ENCODE measurements at regions of chr4 and their contacts with region 1.

Region 1: DNA sequence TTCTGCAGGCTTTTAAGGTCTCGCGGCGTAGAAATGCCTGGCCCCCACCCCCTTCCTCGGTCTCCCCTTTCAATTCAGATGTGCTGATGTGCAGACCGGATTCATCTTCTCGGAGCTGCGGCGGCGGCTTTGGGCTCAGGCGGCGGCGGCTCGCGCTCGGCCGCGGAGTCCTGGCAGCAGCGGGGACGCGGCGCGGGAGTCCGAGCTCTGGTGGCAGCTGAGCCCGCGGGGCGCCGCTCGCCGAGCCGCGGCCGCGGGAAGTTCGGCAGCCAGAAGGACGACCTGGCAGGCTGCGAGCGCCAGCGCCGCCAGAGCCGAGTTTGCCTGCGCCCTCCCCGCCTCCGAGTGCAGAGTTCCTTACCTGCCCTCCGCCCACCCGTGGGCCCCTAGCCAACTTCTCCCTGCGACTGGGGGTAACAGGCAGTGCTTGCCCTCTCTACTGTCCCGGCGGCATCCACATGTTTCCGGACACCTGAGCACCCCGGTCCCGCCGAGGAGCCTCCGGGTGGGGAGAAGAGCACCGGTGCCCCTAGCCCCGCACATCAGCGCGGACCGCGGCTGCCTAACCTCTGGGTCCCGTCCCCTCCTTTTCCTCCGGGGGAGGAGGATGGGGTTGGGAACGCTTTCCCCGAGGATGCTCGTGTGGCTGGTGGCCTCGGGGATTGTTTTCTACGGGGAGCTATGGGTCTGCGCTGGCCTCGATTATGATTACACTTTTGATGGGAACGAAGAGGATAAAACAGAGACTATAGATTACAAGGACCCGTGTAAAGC is 448 bp downstream of the TLL1 start:
- DNase-seq: peak; percentile 25 to 66 (median 29)
- ATAC-seq: peak in 3 of 4 donors; percentile 52 to 87 (median 82)
- H3K4me3 ChIP-seq: peak overlapping the region; percentile 37 to 73 (median 60)
- H3K27ac ChIP-seq: peak overlapping the region in 6 of 12 donors; percentile 19 to 55 (median 35)
- H3K4me1 ChIP-seq: peaks cover 0 to 28% (median 2%) of the 10 kb centered on the region in 12 donors
- H3K27me3 ChIP-seq: peaks cover 0 to 41% (median 0%) of the 10 kb centered on the region in 9 donors
- CTCF ChIP-seq: no peak
- POLR2A ChIP-seq: no peak

Region 2: DNA sequence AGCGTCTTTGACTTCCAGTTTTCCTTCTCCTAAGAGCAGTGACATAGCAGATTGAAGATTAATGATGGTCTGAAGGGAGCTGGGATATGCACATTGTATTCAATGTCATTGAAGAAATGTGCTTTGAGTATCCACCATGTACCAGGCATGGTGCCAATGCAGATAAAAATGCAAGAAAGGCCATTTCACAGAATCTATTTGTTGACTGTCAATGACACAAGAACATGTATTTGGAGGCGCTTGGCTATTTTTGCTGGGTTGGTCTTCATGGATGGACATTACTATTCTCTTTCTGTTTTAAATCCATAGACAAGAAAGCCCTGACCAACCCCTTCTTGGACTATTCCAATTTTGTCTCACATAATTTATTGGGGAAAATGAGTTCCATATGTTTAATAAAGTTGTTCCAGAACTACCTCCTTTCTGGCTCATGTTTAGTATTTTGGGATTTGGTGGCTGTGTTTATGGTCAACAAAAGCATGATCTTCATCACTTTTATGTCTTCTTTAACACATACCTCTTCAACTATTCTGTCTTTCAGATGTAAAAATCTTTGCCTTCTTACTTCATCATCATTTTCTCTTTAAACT is 320.2 kb before region 1 on chr4:
- intact Hi-C with region 1: loop called in 2 of 10 experiments (anchors 10 kb)
- DNase-seq: no peak
- ATAC-seq: no peak
- H3K4me3 ChIP-seq: no peak overlapping the region
- H3K27ac ChIP-seq: no peak overlapping the region
- H3K4me1 ChIP-seq: no peaks in the 10 kb centered on the region
- H3K27me3 ChIP-seq: no peaks in the 10 kb centered on the region
- CTCF ChIP-seq: no peak
- POLR2A ChIP-seq: no peak

Region 3: DNA sequence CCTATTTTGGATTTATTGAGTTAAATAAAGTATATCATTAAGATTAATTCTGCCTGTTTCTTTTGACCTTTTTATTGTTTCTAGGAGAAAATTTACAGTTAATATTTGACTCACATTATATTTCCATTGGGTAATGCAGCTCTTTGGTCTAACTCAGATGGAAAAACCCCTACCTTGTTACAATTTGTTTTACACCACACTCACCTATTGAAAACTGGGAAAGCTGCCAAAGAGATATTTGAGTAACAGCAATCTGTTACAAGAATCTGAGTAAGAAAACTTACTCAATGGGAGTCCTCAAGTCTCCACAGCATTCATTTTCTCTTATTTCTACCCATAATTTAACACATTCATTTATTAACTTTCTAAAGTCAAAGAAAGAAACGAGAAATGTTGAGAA is 108.4 kb before region 1 on chr4:
- intact Hi-C with region 1: no loop called
- DNase-seq: no peak
- ATAC-seq: no peak
- H3K4me3 ChIP-seq: no peak overlapping the region
- H3K27ac ChIP-seq: no peak overlapping the region
- H3K4me1 ChIP-seq: peaks cover 0 to 15% (median 4%) of the 10 kb centered on the region in 12 donors
- H3K27me3 ChIP-seq: no peaks in the 10 kb centered on the region
- CTCF ChIP-seq: no peak
- POLR2A ChIP-seq: no peak

Region 4: DNA sequence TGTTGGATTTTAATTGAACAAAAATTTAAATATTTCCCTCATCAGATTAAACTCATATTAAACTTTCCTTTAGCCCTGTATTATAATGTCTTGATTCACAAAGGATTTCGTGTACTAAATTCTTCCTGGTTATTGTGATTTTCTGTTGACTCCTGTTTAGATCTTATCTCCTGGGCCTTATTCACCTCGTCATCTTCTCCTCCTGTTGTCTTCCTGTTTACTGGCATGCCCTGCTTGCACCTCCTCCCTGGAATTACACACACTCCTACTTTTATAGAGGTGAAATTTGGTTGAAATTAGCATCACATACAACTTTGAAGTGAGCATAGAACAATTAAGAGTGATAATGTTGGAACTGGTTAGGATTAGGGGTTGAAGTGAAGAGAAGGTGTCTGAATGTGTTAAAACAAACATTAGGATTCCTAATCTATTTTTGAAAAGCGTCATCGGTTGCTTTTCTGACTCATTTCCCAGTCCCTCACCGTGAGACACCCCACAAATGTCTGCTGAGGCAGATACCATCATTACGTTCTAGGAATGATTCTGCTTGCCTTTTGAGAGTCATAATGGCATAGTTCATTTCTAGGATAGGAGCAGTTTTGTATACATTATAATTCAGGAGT is 32.0 kb after region 1 on chr4:
- intact Hi-C with region 1: loop called in 1 of 10 experiments (anchors 5 kb)
- DNase-seq: no peak
- ATAC-seq: peak in 1 of 4 donors; percentile 62
- H3K4me3 ChIP-seq: no peak overlapping the region
- H3K27ac ChIP-seq: peak overlapping the region in 7 of 12 donors; percentile 8 to 62 (median 50)
- H3K4me1 ChIP-seq: peaks cover 0 to 19% (median 0%) of the 10 kb centered on the region in 12 donors
- H3K27me3 ChIP-seq: no peaks in the 10 kb centered on the region
- CTCF ChIP-seq: no peak
- POLR2A ChIP-seq: no peak

Region 5: GRCh38 chr4:166091912-166092510 is 218.5 kb after region 1 on chr4:
- intact Hi-C with region 1: loop called in 2 of 10 experiments (anchors 10 kb)
- DNase-seq: no peak
- ATAC-seq: no peak
- H3K4me3 ChIP-seq: no peak overlapping the region
- H3K27ac ChIP-seq: no peak overlapping the region
- H3K4me1 ChIP-seq: no peaks in the 10 kb centered on the region
- H3K27me3 ChIP-seq: no peaks in the 10 kb centered on the region
- CTCF ChIP-seq: peak; percentile 65 to 89 (median 76)
- POLR2A ChIP-seq: no peak

Region 6: GRCh38 chr4:166422475-166422874 is 549.0 kb after region 1 on chr4:
- intact Hi-C with region 1: no loop called
- DNase-seq: no peak
- ATAC-seq: no peak
- H3K4me3 ChIP-seq: no peak overlapping the region
- H3K27ac ChIP-seq: no peak overlapping the region
- H3K4me1 ChIP-seq: no peaks in the 10 kb centered on the region
- H3K27me3 ChIP-seq: no peaks in the 10 kb centered on the region
- CTCF ChIP-seq: no peak
- POLR2A ChIP-seq: no peak

Measured in heart left ventricle (tissue), 16 donors.